ENCODE measurements at regions of chr14 and their contacts with region 1.

Region 1: GRCh38 chr14:71130491-71131179 is 223.4 kb downstream of the PCNX1 start:
- DNase-seq: no peak
- ATAC-seq: peak; percentile 33 to 94
- H3K4me3 ChIP-seq: no peak overlapping the region
- H3K27ac ChIP-seq: no peak overlapping the region
- H3K4me1 ChIP-seq: no peaks in the 10 kb centered on the region
- H3K27me3 ChIP-seq: no peaks in the 10 kb centered on the region

Region 2: DNA sequence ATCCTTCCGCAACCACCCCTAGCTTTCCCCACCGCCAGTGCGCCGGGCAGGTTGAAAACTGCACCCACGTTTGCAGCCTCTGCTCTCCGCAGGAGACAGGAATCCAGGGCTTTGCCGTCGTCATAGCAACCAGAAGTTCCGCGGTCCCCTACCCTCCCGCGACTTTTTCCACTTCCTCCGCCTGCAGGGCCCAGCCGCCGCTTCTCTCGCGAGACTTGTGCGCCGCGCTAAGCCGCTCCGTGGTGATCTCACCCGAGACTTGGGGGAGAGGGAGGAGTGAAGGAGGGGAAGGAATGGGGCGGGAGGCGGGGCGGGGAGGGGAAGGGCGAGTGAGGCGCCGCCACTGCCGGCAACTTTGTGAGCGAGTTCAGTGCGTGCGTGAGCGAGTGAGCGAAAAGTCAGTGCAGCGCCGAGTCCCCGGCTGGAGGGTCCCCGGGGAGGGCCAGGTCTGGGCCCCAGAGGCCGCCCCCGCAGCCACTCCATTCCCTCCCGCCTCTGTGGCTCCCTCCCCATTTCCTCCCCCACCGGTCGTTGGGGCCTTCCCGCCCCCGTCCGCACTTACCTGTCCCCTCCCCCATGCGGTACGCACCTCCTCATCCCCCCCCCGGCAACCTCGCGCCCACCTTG is 189.6 kb after region 1 on chr14:
- intact Hi-C with region 1: loop called in 1 of 4 experiments (anchors 5 kb)
- DNase-seq: peak; percentile 99
- ATAC-seq: peak; percentile 98
- H3K4me3 ChIP-seq: peak within 1 kb of the TSS; percentile 96
- H3K27ac ChIP-seq: peak within 1 kb of the TSS; percentile 73
- H3K4me1 ChIP-seq: peaks cover 2% of the 10 kb centered on the region
- H3K27me3 ChIP-seq: no peaks in the 10 kb centered on the region